SK-N-SH (cell line): ENCODE measurements at regions of chr16 and their contacts with region 1.

Region 1: GRCh38 chr16:69186642-69187445 is at the start of gene SNTB2:
- DNase-seq: peak; percentile 96
- H3K4me3 ChIP-seq: peak within 1 kb of the TSS; percentile 76 to 78
- H3K27ac ChIP-seq: peak within 1 kb of the TSS; percentile 44 to 86
- H3K4me1 ChIP-seq: peaks cover 18 to 22% of the 10 kb centered on the region in 2 experiments
- H3K27me3 ChIP-seq: no peaks in the 10 kb centered on the region
- CTCF ChIP-seq: no peak
- EP300 ChIP-seq: 0 out of 4 replicates have a peak, but pooled peaks of 1 of the 2 experiments have one; percentile 14
- RAD21 ChIP-seq: no peak
- polyA plus RNA-seq, gene SNTB2: 13.0 and 14.4 TPM in 2 replicates

Region 2: GRCh38 chr16:68910051-68910450 is 276.8 kb before region 1 on chr16:
- CTCF ChIA-PET with region 1: no interaction called
- POLR2A ChIA-PET with region 1: no interaction called
- DNase-seq: no peak
- H3K4me3 ChIP-seq: no peak overlapping the region
- H3K27ac ChIP-seq: no peak overlapping the region
- H3K4me1 ChIP-seq: no peaks in the 10 kb centered on the region
- H3K27me3 ChIP-seq: no peaks in the 10 kb centered on the region
- CTCF ChIP-seq: no peak
- EP300 ChIP-seq: no peak
- RAD21 ChIP-seq: no peak

Region 3: GRCh38 chr16:69132424-69133252 is 54.2 kb before region 1 on chr16 and contains the starts of genes CHTF8 and UTP4:
- CTCF ChIA-PET with region 1: no interaction called
- POLR2A ChIA-PET with region 1: no interaction called
- DNase-seq: peak; percentile 92
- H3K4me3 ChIP-seq: peak within 1 kb of the TSS; percentile 85 to 88
- H3K27ac ChIP-seq: peak within 1 kb of the TSS; percentile 86 to 97
- H3K4me1 ChIP-seq: peaks cover 11 to 14% of the 10 kb centered on the region in 2 experiments; a peak in 3 of 4 replicates
- H3K27me3 ChIP-seq: no peaks in the 10 kb centered on the region
- CTCF ChIP-seq: no peak
- EP300 ChIP-seq: 0 out of 4 replicates have a peak, but pooled peaks of 1 of the 2 experiments have one; percentile 8
- RAD21 ChIP-seq: no peak
- polyA plus RNA-seq, gene CHTF8: 83.0 and 96.6 TPM in 2 replicates
- polyA plus RNA-seq, gene UTP4: 66.5 and 91.7 TPM in 2 replicates

Region 4: GRCh38 chr16:69201787-69202186 is 14.9 kb after region 1 on chr16:
- CTCF ChIA-PET with region 1: no interaction called
- POLR2A ChIA-PET with region 1: no interaction called
- DNase-seq: no peak
- H3K4me3 ChIP-seq: no peak overlapping the region
- H3K27ac ChIP-seq: peak overlapping the region in 1 of 2 experiments; percentile 1; a peak in 1 of 4 replicates
- H3K4me1 ChIP-seq: peaks cover 2 to 12% of the 10 kb centered on the region in 2 experiments; a peak in 3 of 4 replicates
- H3K27me3 ChIP-seq: no peaks in the 10 kb centered on the region
- CTCF ChIP-seq: no peak
- EP300 ChIP-seq: no peak
- RAD21 ChIP-seq: no peak

Region 5: DNA sequence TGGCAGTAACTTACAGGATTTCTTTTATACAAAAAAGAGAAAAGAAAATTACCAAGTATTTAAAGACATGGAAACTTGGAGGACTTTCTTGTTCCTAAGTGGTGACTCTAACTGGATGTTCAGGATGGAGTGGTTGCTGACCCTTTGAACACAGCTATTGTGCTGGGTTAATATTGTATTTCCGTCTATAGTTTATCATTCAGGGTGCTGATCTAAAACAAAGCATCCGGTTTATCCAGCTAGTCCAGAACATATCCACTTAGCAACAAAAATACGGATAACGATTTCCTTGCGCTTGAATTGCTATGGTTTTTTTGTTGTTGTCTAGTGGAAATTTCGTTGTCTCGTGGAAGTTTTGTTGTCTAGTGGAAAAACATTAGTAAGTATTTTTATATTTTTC is 38.3 kb after region 1 on chr16:
- CTCF ChIA-PET with region 1: no interaction called
- POLR2A ChIA-PET with region 1: no interaction called
- DNase-seq: no peak
- H3K4me3 ChIP-seq: no peak overlapping the region
- H3K27ac ChIP-seq: no peak overlapping the region
- H3K4me1 ChIP-seq: peaks cover 0 to 22% of the 10 kb centered on the region in 2 experiments; a peak in 1 of 4 replicates
- H3K27me3 ChIP-seq: no peaks in the 10 kb centered on the region
- CTCF ChIP-seq: no peak
- EP300 ChIP-seq: no peak
- RAD21 ChIP-seq: no peak

Region 6: GRCh38 chr16:69286941-69287713 is 100.3 kb after region 1 on chr16:
- CTCF ChIA-PET with region 1: interaction called, 11 read pairs
- POLR2A ChIA-PET with region 1: interaction called, 3 read pairs
- DNase-seq: peak; percentile 39
- H3K4me3 ChIP-seq: no peak overlapping the region
- H3K27ac ChIP-seq: no peak overlapping the region
- H3K4me1 ChIP-seq: peaks cover 0 to 5% of the 10 kb centered on the region in 2 experiments; a peak in 1 of 4 replicates
- H3K27me3 ChIP-seq: no peaks in the 10 kb centered on the region
- CTCF ChIP-seq: peak; percentile 67
- EP300 ChIP-seq: no peak
- RAD21 ChIP-seq: peak; percentile 73